PC-9 (cell line): ENCODE measurements at regions of chr16 and their contacts with region 1.

Region 1: DNA sequence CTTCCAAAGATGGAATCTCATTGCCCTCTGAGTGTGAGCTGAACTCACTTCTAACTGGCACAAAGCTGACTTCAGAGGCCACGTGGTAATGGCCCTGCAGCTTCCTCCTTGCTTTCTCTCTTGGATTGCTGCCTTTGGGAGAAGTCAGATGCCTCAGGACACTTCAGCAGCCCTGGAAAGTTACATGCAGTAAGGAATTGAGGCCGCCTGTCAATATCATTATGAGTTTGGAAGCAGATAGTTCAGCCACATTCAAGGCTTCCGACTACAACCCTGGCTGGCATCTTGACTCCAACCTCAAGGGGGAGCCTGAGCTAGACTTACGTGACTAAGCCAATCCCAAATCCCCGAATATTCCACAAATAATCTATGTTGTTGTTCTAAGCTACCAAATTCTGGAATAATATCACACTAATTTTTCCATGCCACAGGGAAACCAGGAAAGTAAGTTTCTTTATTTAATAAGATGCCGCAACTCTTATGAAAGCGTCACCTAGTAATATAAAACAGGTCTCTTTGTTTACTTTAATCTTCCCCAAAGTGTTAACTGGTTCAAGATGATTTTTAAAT is 13.6 kb downstream of the CEP20 start:
- DNase-seq: peak; percentile 39 to 57
- H3K4me3 ChIP-seq: no peak overlapping the region
- H3K27ac ChIP-seq: peak overlapping the region; percentile 27
- H3K4me1 ChIP-seq: peaks cover 24% of the 10 kb centered on the region
- H3K27me3 ChIP-seq: no peaks in the 10 kb centered on the region
- CTCF ChIP-seq: peak; percentile 81

Region 2: DNA sequence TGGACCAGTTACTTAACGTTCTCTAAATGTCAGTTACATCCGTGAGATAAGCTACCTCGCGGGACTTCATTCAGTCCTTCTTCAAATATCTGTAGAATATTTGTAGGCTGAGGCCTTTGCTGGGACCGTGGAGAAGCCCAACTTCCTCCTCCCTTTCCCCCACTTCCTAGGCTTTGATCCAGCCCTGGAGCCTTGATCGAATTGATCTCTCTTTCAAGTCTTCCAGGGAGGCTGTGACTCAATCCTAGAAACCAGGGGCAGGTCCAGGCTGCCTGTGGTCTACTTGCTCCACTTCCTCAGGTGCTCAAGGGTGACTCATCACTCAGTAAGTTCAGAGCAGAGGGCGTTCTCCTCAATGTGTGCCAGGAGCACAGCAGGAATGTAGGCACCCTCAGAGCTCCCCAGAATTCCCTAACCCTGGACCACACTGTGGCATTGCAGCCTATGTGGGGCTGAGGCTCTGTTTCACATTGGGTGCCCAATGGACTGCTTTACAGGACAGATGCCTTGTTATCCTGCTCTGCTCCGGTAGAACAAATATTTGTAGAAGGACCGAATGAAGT is 24.8 kb after region 1 on chr16:
- CTCF ChIA-PET with region 1: no interaction called
- POLR2A ChIA-PET with region 1: interaction called, 7 read pairs
- intact Hi-C with region 1: loop called (anchors 2 kb)
- DNase-seq: peak; percentile 94 to 100
- H3K4me3 ChIP-seq: peak overlapping the region; percentile 22; the same call in 1 of the 2 replicates
- H3K27ac ChIP-seq: peak overlapping the region; percentile 89
- H3K4me1 ChIP-seq: peaks cover 56% of the 10 kb centered on the region
- H3K27me3 ChIP-seq: no peaks in the 10 kb centered on the region
- CTCF ChIP-seq: no peak

Region 3: DNA sequence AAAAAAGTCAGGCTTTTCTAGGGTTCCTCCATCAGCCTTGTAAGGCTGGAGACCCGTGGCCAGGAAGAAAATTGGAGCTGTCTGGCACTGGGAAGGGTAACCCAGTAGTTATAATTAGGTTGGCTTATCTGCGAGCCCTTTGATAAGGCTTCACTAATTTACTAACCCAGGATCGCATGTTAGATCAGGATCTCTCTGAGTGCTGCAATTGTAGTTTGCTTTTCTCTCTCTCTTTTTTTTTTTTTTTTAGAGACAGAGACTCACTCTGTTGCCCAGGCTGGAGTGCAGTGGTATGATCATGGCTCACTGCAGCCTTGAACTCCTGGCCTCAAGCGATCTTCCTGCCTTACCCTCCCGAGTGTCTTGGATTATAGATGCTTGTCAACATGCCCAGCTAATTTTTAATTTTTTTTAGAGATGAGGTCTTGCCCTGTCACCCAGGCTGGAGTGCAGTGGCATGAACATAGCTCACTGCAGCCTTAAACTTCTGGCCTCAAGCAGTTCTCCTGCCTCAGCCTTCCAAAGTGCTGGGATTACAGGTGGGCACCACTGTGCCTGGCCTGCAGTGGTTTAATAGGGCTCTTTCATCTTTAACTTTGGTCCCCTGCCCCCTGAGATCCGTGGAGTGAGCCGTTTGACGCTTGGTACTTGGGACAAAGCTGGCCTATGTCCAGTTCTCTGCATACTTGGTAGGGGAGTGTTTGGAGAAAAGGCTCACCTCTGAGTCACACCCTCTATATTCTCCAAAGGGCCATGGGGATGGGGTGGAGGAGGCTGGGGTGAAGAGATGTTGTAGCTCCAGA is 91.8 kb after region 1 on chr16:
- CTCF ChIA-PET with region 1: no interaction called
- POLR2A ChIA-PET with region 1: interaction called, 5 read pairs
- intact Hi-C with region 1: loop called (anchors 1 kb)
- DNase-seq: peak; percentile 83 to 88
- H3K4me3 ChIP-seq: no peak overlapping the region; the same call in 1 of the 2 replicates
- H3K27ac ChIP-seq: peak overlapping the region; percentile 73
- H3K4me1 ChIP-seq: peaks cover 57% of the 10 kb centered on the region
- H3K27me3 ChIP-seq: no peaks in the 10 kb centered on the region
- CTCF ChIP-seq: no peak

Region 4: GRCh38 chr16:16073891-16074881 is 199.4 kb after region 1 on chr16:
- CTCF ChIA-PET with region 1: interaction called, 3 read pairs
- POLR2A ChIA-PET with region 1: interaction called, 12 read pairs
- intact Hi-C with region 1: loop called (anchors 1 kb)
- DNase-seq: peak; percentile 98 to 99
- H3K4me3 ChIP-seq: no peak overlapping the region; the same call in 1 of the 2 replicates
- H3K27ac ChIP-seq: peak overlapping the region; percentile 85
- H3K4me1 ChIP-seq: peaks cover 27% of the 10 kb centered on the region
- H3K27me3 ChIP-seq: no peaks in the 10 kb centered on the region
- CTCF ChIP-seq: no peak